MCF 10A (cell line): ENCODE measurements at regions of chr22 and their contacts with region 1.

Region 1: DNA sequence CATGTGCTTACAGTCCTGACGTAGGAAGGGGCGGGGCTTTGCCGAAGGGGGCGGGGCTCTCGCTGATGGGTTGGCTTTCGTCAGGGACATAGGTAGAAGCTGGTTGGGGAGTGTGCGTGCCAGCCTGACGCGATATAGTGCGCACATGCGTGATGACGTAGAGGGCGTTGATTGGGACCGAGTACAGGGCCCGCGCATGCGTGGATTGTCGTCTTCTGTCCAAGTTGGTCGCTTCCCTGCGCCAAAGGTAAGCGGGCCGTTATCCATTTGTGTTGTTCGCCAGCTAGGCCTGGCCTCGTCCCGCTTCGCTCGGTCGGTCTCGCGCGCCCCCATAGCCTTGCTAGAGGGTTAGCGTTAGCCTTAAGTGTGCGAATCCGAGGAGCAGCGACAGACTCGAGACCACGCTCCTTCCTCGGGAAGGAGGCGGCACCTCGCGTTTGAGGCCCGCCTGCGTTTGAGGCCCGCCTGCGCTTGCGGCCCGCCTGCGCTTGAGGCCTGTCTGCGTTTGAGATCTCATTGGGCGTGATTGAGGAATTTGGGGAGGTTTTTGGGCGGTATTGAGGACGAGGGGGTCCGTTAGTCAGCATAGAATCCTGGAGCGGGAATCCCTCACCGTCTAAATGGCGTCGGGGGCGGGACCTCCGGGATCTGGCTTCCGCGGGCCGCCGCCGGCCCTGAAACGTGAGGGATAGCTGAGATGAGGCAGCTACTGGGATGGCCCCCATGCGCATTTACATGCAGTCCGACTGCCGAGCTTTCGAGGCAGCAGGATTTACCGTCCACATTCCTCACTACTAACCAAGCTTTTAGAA is at the start of gene XRCC6:
- DNase-seq: peak; percentile 100
- H3K4me3 Mint-ChIP-seq: peak within 1 kb of the TSS; percentile 93
- H3K27ac Mint-ChIP-seq: peak within 1 kb of the TSS; percentile 95
- H3K4me1 Mint-ChIP-seq: peaks cover 29% of the 10 kb centered on the region
- H3K27me3 Mint-ChIP-seq: no peaks in the 10 kb centered on the region
- CTCF ChIP-seq: no peak
- total RNA-seq, gene XRCC6: 173 and 203 TPM in 2 replicates

Region 2: DNA sequence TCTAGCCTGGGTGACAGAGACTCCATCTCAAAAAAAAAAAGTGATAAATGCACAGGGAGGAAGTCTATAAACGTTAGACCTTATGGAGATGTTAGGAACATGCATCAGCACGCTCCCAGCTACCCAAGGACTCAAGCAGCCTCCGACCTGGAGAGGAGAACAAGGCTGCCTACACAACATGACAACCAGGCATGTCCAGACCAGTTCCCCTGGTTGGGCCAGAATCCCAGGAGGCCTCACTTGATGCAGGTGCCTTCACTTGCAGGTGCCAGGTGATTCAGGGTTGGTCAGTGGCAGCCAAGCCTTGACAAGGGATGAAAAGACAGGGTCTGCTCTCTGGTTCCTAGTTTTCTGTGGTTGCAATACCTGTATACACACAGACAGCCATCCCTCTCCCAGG is 341.2 kb before region 1 on chr22:
- CTCF ChIA-PET with region 1: no interaction called
- POLR2A ChIA-PET with region 1: no interaction called
- intact Hi-C with region 1: no loop called
- DNase-seq: peak; percentile 95
- H3K4me3 Mint-ChIP-seq: no peak overlapping the region
- H3K27ac Mint-ChIP-seq: peak overlapping the region; percentile 81
- H3K4me1 Mint-ChIP-seq: peaks cover 19% of the 10 kb centered on the region
- H3K27me3 Mint-ChIP-seq: no peaks in the 10 kb centered on the region
- CTCF ChIP-seq: no peak

Region 3: DNA sequence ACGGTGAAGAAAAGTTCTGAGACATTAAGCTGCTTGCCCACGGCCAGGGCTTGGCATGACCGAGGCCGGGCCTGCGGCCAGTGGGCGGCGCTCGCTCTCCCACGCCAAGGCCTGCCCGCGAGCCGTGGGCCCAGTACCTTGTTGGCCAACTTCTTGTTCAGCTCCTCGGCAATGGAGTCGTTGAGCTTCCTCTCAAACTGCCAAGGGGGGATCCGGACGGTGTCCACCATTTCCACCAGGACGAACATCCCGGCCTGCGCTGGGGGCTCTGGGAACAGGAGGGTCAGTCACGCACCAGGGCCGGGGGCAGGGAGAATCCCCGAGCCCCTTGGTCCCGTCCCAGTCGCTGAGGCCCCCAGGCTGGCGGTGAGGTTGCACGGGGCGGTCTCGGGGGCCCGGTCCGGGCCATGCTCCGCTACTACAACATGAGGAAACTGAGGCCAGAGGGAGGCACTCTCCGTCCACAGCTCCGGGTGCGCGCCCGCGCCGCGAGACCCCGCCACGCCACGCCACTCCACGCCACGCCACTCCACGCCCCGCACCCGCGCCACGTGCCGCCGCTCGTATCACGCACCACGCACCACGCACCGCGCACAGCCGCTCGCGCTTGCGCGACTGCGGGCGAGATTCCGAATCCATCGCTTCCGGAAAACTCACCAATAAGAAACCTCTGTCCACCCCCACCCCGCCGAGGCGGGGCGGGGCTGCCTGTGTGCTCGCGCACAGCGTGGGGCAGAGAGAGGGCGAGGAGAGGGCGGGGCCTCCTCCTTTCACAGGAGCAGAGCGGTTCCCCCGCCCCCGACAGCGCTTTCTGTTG is 77.2 kb before region 1 on chr22 and contains the start of gene POLR3H:
- CTCF ChIA-PET with region 1: interaction called, 4 read pairs
- POLR2A ChIA-PET with region 1: interaction called, 19 read pairs
- intact Hi-C with region 1: no loop called
- DNase-seq: peak; percentile 97
- H3K4me3 Mint-ChIP-seq: peak within 1 kb of the TSS; percentile 96
- H3K27ac Mint-ChIP-seq: peak within 1 kb of the TSS; percentile 89
- H3K4me1 Mint-ChIP-seq: peaks cover 28% of the 10 kb centered on the region
- H3K27me3 Mint-ChIP-seq: no peaks in the 10 kb centered on the region
- CTCF ChIP-seq: peak; percentile 27
- total RNA-seq, gene POLR3H: 26.3 and 35.5 TPM in 2 replicates

Region 4: GRCh38 chr22:41596776-41597634 is 24.3 kb before region 1 on chr22:
- CTCF ChIA-PET with region 1: interaction called, 18 read pairs
- POLR2A ChIA-PET with region 1: interaction called, 33 read pairs
- intact Hi-C with region 1: no loop called
- DNase-seq: peak; percentile 58
- H3K4me3 Mint-ChIP-seq: no peak overlapping the region
- H3K27ac Mint-ChIP-seq: peak overlapping the region; percentile 59
- H3K4me1 Mint-ChIP-seq: peaks cover 14% of the 10 kb centered on the region
- H3K27me3 Mint-ChIP-seq: no peaks in the 10 kb centered on the region
- CTCF ChIP-seq: peak; percentile 65

Region 5: DNA sequence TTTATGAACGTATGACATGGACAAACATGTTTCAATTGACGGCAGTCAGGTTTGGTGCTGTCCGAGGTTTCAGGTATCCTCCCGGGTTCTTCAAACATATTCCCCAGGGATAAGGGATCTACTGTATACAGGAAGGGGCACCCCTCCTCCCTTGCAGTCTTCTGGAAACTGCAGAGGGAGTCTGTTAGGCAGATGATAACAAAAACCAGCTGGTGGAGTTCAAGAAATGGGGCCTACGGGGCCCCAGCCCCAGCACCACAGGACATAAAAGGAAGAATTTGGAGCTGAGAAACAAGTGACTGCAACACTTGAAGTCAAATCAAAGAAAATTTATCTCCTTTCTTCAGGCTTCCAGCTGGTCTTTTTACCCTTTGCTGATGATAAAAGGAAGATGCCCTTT is 35.3 kb after region 1 on chr22:
- CTCF ChIA-PET with region 1: no interaction called
- POLR2A ChIA-PET with region 1: interaction called, 12 read pairs
- intact Hi-C with region 1: no loop called
- DNase-seq: no peak
- H3K4me3 Mint-ChIP-seq: no peak overlapping the region
- H3K27ac Mint-ChIP-seq: no peak overlapping the region
- H3K4me1 Mint-ChIP-seq: peaks cover 4% of the 10 kb centered on the region
- H3K27me3 Mint-ChIP-seq: no peaks in the 10 kb centered on the region
- CTCF ChIP-seq: no peak

Region 6: GRCh38 chr22:41688365-41689211 is 67.3 kb after region 1 on chr22 and contains the start of gene SNU13:
- CTCF ChIA-PET with region 1: interaction called, 3 read pairs
- POLR2A ChIA-PET with region 1: interaction called, 18 read pairs
- intact Hi-C with region 1: no loop called
- DNase-seq: peak; percentile 92
- H3K4me3 Mint-ChIP-seq: peak within 1 kb of the TSS; percentile 96
- H3K27ac Mint-ChIP-seq: peak within 1 kb of the TSS; percentile 97
- H3K4me1 Mint-ChIP-seq: peaks cover 12% of the 10 kb centered on the region
- H3K27me3 Mint-ChIP-seq: no peaks in the 10 kb centered on the region
- CTCF ChIP-seq: no peak
- total RNA-seq, gene SNU13: 280 and 286 TPM in 2 replicates

Region 7: DNA sequence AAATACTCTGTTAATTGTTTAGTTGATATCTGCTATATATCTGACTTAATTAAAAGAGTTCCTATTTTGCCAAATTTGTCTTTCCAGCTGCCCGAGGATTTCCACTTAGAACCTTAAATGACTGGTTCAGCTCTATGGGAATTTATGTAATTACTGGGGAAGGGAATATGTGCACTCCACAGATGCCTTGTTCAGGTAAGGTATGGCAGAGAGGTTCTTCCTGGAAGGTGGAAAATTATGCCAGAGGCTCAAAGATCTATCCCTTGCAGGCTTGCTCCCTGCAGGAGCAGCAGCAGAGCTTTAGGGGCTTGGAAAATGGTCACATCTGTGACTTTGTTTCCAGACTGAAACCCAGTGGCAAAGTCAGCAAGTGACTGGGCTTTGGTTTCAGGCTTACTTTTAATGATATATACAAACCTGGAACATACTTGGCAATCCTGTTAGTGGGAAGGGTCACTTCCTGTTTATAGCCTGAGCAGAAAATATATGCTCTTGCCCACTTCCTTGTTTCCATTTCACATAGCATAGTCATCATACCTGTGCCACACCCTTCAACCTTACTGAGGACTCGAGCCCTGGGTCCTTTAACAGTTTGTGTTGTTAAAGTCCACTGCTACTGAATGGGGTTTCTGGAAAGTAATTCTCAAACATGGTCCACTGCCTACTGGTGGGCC is 401.0 kb after region 1 on chr22:
- CTCF ChIA-PET with region 1: no interaction called
- POLR2A ChIA-PET with region 1: no interaction called
- intact Hi-C with region 1: no loop called
- DNase-seq: no peak
- H3K4me3 Mint-ChIP-seq: no peak overlapping the region
- H3K27ac Mint-ChIP-seq: no peak overlapping the region
- H3K4me1 Mint-ChIP-seq: no peaks in the 10 kb centered on the region
- H3K27me3 Mint-ChIP-seq: peaks cover 27% of the 10 kb centered on the region
- CTCF ChIP-seq: no peak